ENCODE measurements at regions of chr14 and their contacts with region 1.

Region 1: DNA sequence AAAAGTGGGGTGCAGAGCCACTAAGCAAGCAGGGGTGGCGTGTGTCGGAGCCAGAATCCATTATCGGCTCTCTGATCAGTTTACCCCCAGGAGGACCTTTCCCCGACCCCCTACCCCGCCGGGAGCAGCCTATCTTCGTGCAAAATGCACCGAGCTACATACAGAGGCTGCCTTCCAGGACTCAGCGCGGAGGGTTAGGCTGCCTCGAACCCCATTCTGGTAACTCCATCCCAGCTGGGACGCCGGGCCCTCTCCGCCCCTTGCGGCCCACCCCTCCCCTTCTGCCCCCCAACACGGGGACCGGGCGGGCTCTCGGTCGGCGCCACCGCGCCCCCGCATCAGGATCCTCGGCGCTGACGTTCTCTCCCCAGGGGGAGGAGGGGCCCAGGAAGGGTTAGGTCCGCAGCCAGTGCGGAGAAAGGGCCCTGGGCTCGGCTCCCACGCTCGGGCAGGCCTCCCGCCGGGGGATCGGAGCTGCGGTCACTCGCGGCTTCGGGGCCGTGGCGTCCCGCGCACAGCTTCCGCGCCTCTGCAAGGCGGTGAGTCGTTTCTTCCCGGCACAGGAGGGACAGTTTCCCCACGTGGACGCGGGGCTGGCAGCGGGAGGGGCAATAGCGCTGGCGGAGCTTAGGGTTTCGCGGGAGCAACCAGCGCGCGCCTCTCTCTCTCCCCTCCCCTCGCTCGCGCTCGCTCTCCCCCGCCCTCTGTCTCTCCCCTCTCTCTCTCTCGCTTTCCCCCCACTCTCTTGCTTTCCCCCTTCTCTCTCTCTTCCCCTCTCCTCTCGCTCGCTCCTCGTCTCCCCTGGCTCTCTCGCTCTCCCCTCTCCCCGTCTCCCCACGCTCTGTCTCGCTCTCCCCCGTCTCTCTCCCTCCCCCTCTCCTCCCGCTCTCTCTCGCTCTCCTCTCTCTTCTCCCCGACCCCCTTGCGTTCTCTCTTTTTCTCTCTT is 12.5 kb upstream of the MAP3K9 start:
- DNase-seq: peak; percentile 45 to 49
- H3K4me3 ChIP-seq: peak overlapping the region; percentile 91
- H3K4me3 Mint-ChIP-seq: peak overlapping the region; percentile 74
- H3K27ac Mint-ChIP-seq: no peak overlapping the region
- H3K4me1 ChIP-seq: 0 out of 2 replicates have a peak, but pooled peaks cover 2% of the 10 kb centered on the region
- H3K4me1 Mint-ChIP-seq: peaks cover 7% of the 10 kb centered on the region
- H3K27me3 ChIP-seq: no peaks in the 10 kb centered on the region
- H3K27me3 Mint-ChIP-seq: peaks cover 4% of the 10 kb centered on the region
- CTCF ChIP-seq: no peak

Region 2: DNA sequence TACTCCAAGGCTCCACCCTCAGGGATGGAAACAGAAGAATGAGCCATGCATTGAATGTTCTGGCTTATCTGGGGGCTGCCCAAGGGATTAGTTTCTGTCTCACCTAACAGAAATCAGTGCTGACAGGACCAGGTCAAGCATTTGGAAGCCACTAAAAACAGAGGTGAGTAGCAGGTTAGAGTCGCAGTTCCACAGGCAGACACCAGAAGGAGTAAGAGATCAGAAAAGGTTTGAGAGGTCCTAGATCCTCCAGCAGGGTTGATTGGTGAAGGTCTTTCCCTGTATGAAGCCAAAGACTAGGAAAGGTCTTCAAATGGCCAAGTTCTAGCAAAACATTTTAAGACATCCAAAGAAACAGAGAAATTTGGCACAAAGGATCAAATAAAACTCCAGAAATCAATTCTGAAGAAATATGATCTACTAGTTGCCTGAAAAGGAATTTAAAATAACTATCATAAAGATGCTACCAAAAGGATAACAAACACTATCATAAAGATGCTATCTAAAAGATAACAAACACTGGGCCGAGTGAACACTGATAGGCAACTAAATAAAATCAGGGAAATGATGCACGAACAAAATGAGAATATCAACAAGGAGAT is 199.6 kb before region 1 on chr14:
- CTCF ChIA-PET with region 1: no interaction called
- POLR2A ChIA-PET with region 1: no interaction called
- intact Hi-C with region 1: loop called (anchors 1 kb)
- DNase-seq: peak; percentile 68 to 79
- H3K4me3 ChIP-seq: no peak overlapping the region
- H3K4me3 Mint-ChIP-seq: no peak overlapping the region
- H3K27ac Mint-ChIP-seq: no peak overlapping the region
- H3K4me1 ChIP-seq: 0 out of 2 replicates have a peak, but pooled peaks cover 6% of the 10 kb centered on the region
- H3K4me1 Mint-ChIP-seq: peaks cover 6% of the 10 kb centered on the region
- H3K27me3 ChIP-seq: no peaks in the 10 kb centered on the region
- H3K27me3 Mint-ChIP-seq: peaks cover 1% of the 10 kb centered on the region
- CTCF ChIP-seq: peak; percentile 82

Region 3: DNA sequence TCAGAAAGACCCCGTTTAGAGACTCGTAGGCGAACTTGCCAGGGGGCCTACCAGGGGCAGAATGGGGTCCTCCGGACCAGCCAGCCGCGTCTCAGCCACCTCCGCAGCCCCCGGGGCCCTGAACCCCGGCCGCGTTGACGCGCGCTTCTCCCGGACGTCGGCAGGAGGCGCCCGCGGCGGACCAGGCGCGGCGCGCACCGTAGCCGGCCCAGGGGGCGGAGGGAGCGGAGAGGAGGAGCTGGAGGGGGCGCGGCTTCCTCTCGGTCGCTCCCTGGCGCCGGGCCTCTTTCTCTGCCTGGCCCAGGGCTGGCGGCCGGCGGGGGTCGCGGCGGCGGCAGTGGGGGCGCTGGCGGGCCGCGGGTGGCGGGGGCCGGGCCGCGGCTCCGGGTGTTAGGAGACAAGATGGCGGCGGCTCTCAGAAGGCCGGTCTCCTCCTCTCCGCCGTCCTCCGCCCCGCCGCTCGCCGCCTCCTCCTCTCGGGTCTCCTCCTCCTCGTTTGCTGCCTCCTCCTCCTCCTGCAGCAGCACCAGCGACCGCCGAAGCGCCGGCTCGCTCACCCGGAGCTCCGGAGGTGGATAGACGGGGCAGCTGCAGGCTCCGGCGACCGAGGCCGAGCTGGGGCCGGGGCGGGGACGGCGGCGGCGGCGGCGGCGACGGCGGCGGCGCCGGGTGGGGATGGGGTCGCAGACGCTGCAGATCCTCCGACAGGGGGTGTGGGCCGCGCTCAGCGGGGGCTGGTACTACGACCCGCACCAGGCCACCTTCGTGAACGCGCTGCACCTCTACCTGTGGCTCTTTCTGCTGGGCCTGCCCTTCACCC is 85.5 kb after region 1 on chr14 and contains the start of gene PCNX1:
- CTCF ChIA-PET with region 1: interaction called, 5 read pairs
- POLR2A ChIA-PET with region 1: interaction called, 6 read pairs
- intact Hi-C with region 1: loop called (anchors 5 kb)
- DNase-seq: peak; percentile 86 to 94
- H3K4me3 ChIP-seq: peak within 1 kb of the TSS; percentile 95
- H3K4me3 Mint-ChIP-seq: peak within 1 kb of the TSS; percentile 80
- H3K27ac Mint-ChIP-seq: peak within 1 kb of the TSS; percentile 79
- H3K4me1 ChIP-seq: peaks cover 14% of the 10 kb centered on the region
- H3K4me1 Mint-ChIP-seq: peaks cover 21% of the 10 kb centered on the region
- H3K27me3 ChIP-seq: no peaks in the 10 kb centered on the region
- H3K27me3 Mint-ChIP-seq: no peaks in the 10 kb centered on the region
- CTCF ChIP-seq: peak; percentile 47 to 77
- total RNA-seq, gene PCNX1: 29.0 and 37.4 TPM in 2 replicates

Region 4: GRCh38 chr14:70955543-70956480 is 134.0 kb after region 1 on chr14:
- CTCF ChIA-PET with region 1: interaction called, 4 read pairs
- POLR2A ChIA-PET with region 1: no interaction called
- intact Hi-C with region 1: loop called (anchors 1 kb)
- DNase-seq: peak in 1 of 2 experiments; percentile 39
- H3K4me3 ChIP-seq: no peak overlapping the region
- H3K4me3 Mint-ChIP-seq: no peak overlapping the region
- H3K27ac Mint-ChIP-seq: no peak overlapping the region
- H3K4me1 ChIP-seq: no peaks in the 10 kb centered on the region
- H3K4me1 Mint-ChIP-seq: no peaks in the 10 kb centered on the region
- H3K27me3 ChIP-seq: no peaks in the 10 kb centered on the region
- H3K27me3 Mint-ChIP-seq: no peaks in the 10 kb centered on the region
- CTCF ChIP-seq: peak; percentile 40 to 65

Region 5: GRCh38 chr14:70972107-70972976 is 150.5 kb after region 1 on chr14:
- CTCF ChIA-PET with region 1: interaction called, 3 read pairs
- POLR2A ChIA-PET with region 1: no interaction called
- intact Hi-C with region 1: loop called (anchors 1 kb)
- DNase-seq: peak; percentile 77 to 79
- H3K4me3 ChIP-seq: no peak overlapping the region
- H3K4me3 Mint-ChIP-seq: no peak overlapping the region
- H3K27ac Mint-ChIP-seq: no peak overlapping the region
- H3K4me1 ChIP-seq: no peaks in the 10 kb centered on the region
- H3K4me1 Mint-ChIP-seq: no peaks in the 10 kb centered on the region
- H3K27me3 ChIP-seq: no peaks in the 10 kb centered on the region
- H3K27me3 Mint-ChIP-seq: no peaks in the 10 kb centered on the region
- CTCF ChIP-seq: peak; percentile 71 to 88

Measured in Caco-2 (cell line).